Gastrocnemius medialis (tissue), 4 donors: ENCODE measurements at regions of chr2 and their contacts with region 1.

Region 1: GRCh38 chr2:119311356-119311755 is 55.3 kb downstream of the C2orf76 start:
- DNase-seq: no peak
- ATAC-seq: no peak
- H3K4me3 ChIP-seq: no peak overlapping the region
- H3K27ac ChIP-seq: peak overlapping the region in 1 of 4 donors; percentile 2
- H3K4me1 ChIP-seq: peaks cover 0 to 17% of the 10 kb centered on the region in 2 donors
- H3K27me3 ChIP-seq: no peaks in the 10 kb centered on the region
- CTCF ChIP-seq: no peak
- POLR2A ChIP-seq: no peak

Region 2: DNA sequence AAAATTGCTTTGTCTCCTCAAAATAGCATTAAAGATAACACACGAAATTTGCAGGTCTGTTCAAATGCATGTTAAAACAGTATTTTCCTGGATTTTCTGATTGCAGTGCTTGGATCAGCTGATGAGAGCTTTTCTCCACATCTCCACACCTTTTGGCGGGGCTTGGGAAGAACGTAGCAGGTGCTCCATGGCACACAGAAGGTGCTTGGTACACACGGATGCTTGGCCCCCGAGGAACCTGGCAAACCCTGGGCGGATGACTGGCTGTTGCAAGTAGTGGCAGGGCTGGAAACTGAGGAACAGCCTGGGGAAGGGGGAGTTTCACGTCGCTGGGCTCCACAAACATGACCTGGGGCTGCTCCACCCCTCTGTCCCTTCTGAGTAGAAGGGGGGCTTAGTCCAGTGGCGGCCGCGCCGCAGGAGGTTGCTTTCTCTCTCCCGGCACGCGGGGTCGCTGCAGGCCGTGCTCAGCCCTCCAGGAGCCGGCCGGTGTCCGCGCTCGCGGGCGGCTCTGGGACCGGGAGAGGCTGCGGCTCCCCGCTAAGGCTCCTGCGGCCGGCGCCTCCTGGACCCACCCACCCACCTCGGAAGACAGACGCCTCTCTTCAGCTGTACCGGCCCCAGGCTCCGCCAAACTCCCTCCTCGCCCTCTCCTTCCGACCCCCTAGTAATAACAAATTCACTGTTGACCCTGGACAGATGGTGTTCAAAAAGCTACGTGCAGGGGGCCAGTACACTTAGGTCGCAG is 300.0 kb before region 1 on chr2:
- in situ Hi-C with region 1: loop called in 2 of 4 experiments (anchors 25 kb)
- intact Hi-C with region 1: loop called (anchors 5 kb)
- DNase-seq: no peak
- ATAC-seq: peak; percentile 60 to 65
- H3K4me3 ChIP-seq: peak overlapping the region in 3 of 4 donors; percentile 17 to 21 (median 20)
- H3K27ac ChIP-seq: no peak overlapping the region
- H3K4me1 ChIP-seq: peaks cover 0 to 3% of the 10 kb centered on the region in 2 donors
- H3K27me3 ChIP-seq: peaks cover 0 to 8% (median 3%) of the 10 kb centered on the region in 3 donors
- CTCF ChIP-seq: peak; percentile 24 to 70 (median 58)
- POLR2A ChIP-seq: no peak

Region 3: GRCh38 chr2:119085613-119086012 is 225.7 kb before region 1 on chr2:
- in situ Hi-C with region 1: no loop called
- intact Hi-C with region 1: no loop called
- DNase-seq: no peak
- ATAC-seq: no peak
- H3K4me3 ChIP-seq: no peak overlapping the region
- H3K27ac ChIP-seq: no peak overlapping the region
- H3K4me1 ChIP-seq: no peaks in the 10 kb centered on the region
- H3K27me3 ChIP-seq: no peaks in the 10 kb centered on the region
- CTCF ChIP-seq: no peak
- POLR2A ChIP-seq: no peak

Region 4: DNA sequence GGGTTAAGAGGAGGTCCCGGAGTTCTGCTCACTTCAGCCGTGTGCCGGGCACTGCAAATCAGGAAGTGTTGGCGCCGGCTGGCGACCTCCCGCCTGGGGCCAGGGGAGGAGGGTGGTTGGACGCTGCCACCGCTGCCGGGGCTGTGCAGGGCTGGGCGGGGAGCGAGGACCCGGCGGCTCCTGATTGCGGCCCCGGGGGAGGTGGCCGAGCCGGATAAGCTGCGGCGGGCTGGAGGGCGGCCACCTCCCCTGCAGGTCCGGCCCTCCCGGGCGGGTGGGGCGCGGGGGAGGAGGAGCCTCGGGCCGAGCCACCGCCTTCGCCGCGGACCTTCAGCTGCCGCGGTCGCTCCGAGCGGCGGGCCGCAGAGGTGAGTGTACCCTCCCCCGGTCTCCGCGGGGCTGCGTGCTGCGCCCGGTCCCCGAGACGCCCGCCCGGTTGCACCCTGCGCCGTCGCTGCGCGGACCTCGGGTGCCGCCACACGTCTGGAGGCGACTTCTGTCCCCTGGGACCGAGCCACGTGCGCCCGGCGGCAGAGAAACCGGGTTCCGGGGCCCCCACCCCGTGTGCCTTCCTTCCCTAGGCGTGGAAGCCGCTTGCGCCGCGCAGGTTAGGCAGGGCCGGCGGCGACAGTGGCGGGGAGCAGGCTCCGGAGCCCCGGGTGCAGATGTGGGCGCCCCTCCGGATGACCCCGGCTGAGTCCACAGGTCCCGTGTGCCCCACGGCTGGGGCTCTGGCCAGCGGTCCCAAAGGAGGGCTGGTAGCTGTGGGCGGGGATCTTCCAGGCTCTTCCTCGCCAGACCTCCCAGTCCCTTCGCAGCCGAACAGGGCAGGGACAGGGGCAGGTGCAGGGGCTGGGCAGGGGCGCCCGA is 87.6 kb before region 1 on chr2 and contains the start of gene STEAP3:
- in situ Hi-C with region 1: no loop called
- intact Hi-C with region 1: loop called (anchors 5 kb)
- DNase-seq: peak; percentile 62 to 81
- ATAC-seq: peak; percentile 71 to 72
- H3K4me3 ChIP-seq: peak within 1 kb of the TSS; percentile 77 to 88 (median 88)
- H3K27ac ChIP-seq: peak within 1 kb of the TSS; percentile 92 to 98 (median 96)
- H3K4me1 ChIP-seq: peaks cover 28 to 29% of the 10 kb centered on the region in 2 donors
- H3K27me3 ChIP-seq: no peaks in the 10 kb centered on the region
- CTCF ChIP-seq: no peak
- POLR2A ChIP-seq: peak; percentile 90 to 94
- total RNA-seq, gene STEAP3: 10.1 to 21.7 (median 10.6) TPM

Region 5: DNA sequence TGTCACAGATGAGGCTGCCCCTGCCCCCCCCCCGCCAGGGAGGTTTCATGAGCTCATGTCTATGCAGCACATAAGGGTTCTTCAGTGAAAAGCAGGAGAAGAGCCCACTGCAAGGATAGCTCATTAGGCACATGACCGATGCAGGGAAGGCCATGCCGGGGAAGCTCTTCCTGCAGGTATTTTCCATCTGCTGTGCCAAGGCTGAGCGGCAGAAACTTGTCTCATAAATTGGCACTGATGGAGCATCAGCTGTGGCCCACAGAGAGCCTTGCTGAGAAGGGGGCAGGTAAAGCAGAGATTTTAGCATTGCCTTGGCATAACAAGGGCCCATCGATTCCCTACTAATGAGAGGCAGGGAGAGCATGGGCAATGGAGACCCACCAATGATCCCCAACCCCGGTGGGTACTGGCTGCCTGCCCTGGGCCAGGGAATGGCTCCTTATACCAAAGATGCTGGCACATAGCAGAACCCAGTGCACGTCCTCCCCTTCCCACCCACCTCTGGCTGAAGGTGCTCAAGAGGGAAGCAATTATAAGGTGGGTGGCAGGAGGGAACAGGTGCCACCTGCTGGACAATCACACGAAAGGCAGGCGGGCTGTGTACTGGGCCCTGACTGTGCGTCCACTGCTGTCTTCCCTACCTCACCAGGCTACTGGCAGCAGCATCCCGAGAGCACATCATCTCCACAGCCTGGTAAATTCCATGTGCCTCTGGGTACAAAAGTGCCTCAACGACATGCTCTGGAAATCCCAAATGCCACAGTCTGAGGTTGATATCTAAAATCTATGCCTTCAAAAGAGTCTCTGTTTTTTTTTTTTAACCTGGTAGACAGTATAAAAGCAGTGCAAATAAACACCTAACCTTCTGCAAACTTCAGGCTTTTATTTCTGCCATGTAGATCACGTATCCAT is 46.3 kb before region 1 on chr2:
- in situ Hi-C with region 1: no loop called
- intact Hi-C with region 1: loop called (anchors 2 kb)
- DNase-seq: peak; percentile 34 to 68
- ATAC-seq: peak; percentile 94 to 96
- H3K4me3 ChIP-seq: no peak overlapping the region
- H3K27ac ChIP-seq: peak overlapping the region in 1 of 4 donors; percentile 12
- H3K4me1 ChIP-seq: peaks cover 8% of the 10 kb centered on the region in 2 donors
- H3K27me3 ChIP-seq: no peaks in the 10 kb centered on the region
- CTCF ChIP-seq: peak; percentile 63 to 88 (median 82)
- POLR2A ChIP-seq: no peak